IMR-90 (cell line): ENCODE measurements at regions of chr4 and their contacts with region 1.

Region 1: DNA sequence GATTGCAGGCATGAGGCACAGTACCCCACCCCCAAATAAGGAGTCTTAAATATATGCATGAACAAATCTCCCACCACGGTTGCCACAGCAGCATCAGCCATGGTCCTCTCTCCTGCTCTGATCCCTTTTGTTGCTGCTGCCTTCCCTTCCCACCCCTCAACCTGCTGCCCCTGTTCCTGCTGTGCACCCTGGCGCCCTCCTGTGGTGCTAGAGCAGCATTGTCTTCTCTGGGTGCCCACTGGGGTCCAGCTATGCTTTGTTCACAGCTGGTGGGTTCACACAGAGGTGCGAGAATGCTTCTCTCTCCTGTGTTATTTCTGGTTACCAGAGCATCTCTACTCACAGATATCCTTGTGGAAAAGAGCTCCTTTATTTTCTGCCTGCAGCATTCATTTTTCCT is 116.2 kb downstream of the GATB start:
- DNase-seq: no peak
- ATAC-seq: no peak
- H3K4me3 ChIP-seq: no peak overlapping the region
- H3K27ac ChIP-seq: no peak overlapping the region
- H3K4me1 ChIP-seq: no peaks in the 10 kb centered on the region
- H3K27me3 ChIP-seq: peaks cover 20% of the 10 kb centered on the region
- CTCF ChIP-seq: peak; percentile 22; the same call in 1 of the 2 replicates
- POLR2A ChIP-seq: no peak
- RAD21 ChIP-seq: 0 out of 2 replicates have a peak, but pooled peaks have one; percentile 5

Region 2: DNA sequence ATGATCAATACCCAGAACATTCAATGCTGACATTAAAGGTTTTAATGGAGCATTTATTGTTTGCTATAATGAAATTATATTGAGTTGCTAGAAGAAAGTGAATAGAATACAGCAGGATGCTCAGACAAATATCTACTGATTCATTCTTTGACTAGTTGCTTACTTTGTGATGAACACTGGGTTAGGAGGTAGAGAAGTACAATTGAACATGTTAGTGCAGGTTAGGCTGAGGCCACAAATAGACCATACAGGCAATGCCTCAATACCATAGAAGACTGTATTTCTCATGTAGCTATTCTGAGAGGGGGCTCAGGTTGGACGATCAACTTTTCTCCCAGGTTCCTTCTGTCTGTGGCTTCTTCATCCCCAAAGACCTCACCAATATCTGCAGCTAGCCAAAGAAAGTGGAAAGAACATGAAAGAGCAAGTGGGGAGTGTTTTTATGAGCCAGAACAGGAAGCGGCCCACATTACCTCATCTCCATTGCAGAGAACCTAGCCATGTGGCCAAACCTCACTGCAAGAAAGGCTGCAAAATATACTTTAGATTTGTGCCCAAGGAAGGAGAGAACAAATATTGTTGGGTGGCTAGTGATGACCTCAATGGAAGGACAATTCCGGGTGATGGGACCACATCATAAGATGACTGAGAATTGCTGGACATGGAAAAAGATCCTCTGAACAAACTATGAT is 296.4 kb after region 1 on chr4:
- CTCF ChIA-PET with region 1: no interaction called
- POLR2A ChIA-PET with region 1: no interaction called
- dilution Hi-C with region 1: no loop called
- in situ Hi-C with region 1: no loop called
- intact Hi-C with region 1: no loop called
- DNase-seq: no peak
- ATAC-seq: no peak
- H3K4me3 ChIP-seq: no peak overlapping the region
- H3K27ac ChIP-seq: no peak overlapping the region
- H3K4me1 ChIP-seq: no peaks in the 10 kb centered on the region
- H3K27me3 ChIP-seq: peaks cover 7% of the 10 kb centered on the region; the same call in 1 of the 2 replicates
- CTCF ChIP-seq: no peak
- POLR2A ChIP-seq: no peak
- RAD21 ChIP-seq: no peak

Region 3: DNA sequence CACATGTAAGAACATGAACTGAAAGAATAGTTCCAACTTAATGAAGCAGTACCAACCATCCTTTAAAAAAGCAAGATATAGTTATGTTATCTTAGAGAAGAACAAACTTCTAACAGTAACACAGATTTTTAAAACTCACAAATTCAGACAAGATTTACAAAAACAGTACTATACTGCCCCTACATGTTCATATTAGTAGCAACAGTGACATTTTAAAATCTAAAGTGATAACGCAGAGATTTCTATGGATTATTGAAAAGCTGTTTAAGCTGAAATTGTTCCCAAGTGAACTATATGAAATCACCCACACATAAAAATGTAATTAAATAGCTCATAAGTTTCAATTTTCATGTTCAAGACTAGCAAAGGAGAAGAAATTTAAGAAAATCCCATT is 725.3 kb after region 1 on chr4:
- CTCF ChIA-PET with region 1: no interaction called
- POLR2A ChIA-PET with region 1: no interaction called
- dilution Hi-C with region 1: no loop called
- in situ Hi-C with region 1: no loop called
- intact Hi-C with region 1: loop called (anchors 10 kb)
- DNase-seq: peak; percentile 24
- ATAC-seq: 0 out of 2 replicates have a peak, but pooled peaks have one; percentile 56
- H3K4me3 ChIP-seq: no peak overlapping the region
- H3K27ac ChIP-seq: no peak overlapping the region
- H3K4me1 ChIP-seq: peaks cover 3% of the 10 kb centered on the region; the same call in 1 of the 2 replicates
- H3K27me3 ChIP-seq: no peaks in the 10 kb centered on the region
- CTCF ChIP-seq: peak; percentile 50
- POLR2A ChIP-seq: no peak
- RAD21 ChIP-seq: peak; percentile 51